GM12878 (cell line): ENCODE measurements at regions of chr4 and their contacts with region 1.

Region 1: GRCh38 chr4:86497980-86498862 is 95.9 kb upstream of the PTPN13 start:
- DNase-seq: no peak
- ATAC-seq: peak; percentile 93
- H3K4me3 ChIP-seq: no peak overlapping the region
- H3K27ac ChIP-seq: no peak overlapping the region
- H3K4me1 ChIP-seq: no peaks in the 10 kb centered on the region
- H3K27me3 ChIP-seq: no peaks in the 10 kb centered on the region
- CTCF ChIP-seq: peak; percentile 74 to 85 (median 84); a peak in 5 of 6 replicates
- EP300 ChIP-seq: no peak
- POLR2A ChIP-seq: no peak
- RAD21 ChIP-seq: peak; percentile 88

Region 2: DNA sequence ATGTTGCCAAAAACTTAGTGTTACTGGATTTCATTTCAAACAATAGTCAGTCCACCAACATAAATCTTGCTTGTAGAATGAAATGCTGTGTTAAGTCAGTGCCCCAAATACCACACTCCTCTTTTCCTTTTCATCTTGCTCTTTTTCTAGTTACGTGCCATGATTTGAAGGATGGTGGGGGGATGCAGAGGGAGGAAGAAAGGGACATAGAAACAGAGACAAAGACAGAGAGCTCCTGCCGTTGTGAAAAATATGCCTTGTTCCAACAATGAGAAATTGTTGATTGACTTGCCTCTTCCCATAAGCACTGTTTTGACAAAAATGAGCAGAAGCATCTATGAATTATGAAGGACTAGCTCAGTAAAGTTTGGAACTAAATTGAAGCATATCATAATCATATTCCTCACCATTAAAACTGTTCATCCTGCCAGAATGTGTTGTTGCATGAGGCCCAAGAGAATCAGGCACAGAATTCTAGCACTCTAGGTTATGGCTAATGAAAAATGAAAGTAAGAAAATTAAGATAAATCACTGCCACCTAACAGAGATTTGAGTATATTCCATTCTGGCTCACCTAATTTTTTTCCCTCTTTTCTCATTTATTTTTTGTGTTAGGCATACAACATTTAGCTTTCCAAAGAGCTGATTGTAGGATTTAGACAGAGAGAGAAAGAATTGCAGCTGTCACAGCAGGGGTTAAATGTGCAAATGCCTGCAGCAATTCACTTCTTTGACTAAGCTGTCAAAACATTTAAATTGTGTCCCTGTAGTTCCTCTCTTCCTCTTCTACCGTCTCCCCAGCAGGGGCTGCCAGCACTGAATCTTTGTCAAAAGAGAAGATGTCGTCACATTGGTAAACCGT is 15.7 kb before region 1 on chr4:
- CTCF ChIA-PET with region 1: interaction called, 36 read pairs
- POLR2A ChIA-PET with region 1: no interaction called
- RAD21 ChIA-PET with region 1: interaction called, 9 read pairs
- SMC1A ChIA-PET with region 1: interaction called, 42 read pairs
- in situ Hi-C with region 1: no loop called
- intact Hi-C with region 1: no loop called
- DNase-seq: no peak
- ATAC-seq: peak; percentile 56; the same call in 2 of the 3 replicates
- H3K4me3 ChIP-seq: no peak overlapping the region
- H3K27ac ChIP-seq: no peak overlapping the region
- H3K4me1 ChIP-seq: no peaks in the 10 kb centered on the region
- H3K27me3 ChIP-seq: no peaks in the 10 kb centered on the region
- CTCF ChIP-seq: 0 out of 6 replicates have a peak, but pooled peaks of 1 of the 3 experiments have one; percentile 0
- EP300 ChIP-seq: no peak
- POLR2A ChIP-seq: no peak
- RAD21 ChIP-seq: peak; percentile 13; the same call in 1 of the 2 replicates

Region 3: GRCh38 chr4:86557526-86557925 is 59.3 kb after region 1 on chr4:
- CTCF ChIA-PET with region 1: interaction called, 7 read pairs
- POLR2A ChIA-PET with region 1: interaction called, 4 read pairs
- RAD21 ChIA-PET with region 1: interaction called, 71 read pairs
- SMC1A ChIA-PET with region 1: interaction called, 6 read pairs
- in situ Hi-C with region 1: no loop called
- intact Hi-C with region 1: no loop called
- DNase-seq: no peak
- ATAC-seq: peak; percentile 88
- H3K4me3 ChIP-seq: no peak overlapping the region
- H3K27ac ChIP-seq: peak overlapping the region; percentile 69; the same call in 1 of the 2 replicates
- H3K4me1 ChIP-seq: peaks cover 7% of the 10 kb centered on the region; the same call in 1 of the 2 replicates
- H3K27me3 ChIP-seq: no peaks in the 10 kb centered on the region; a peak in 1 of 4 replicates
- CTCF ChIP-seq: no peak
- EP300 ChIP-seq: no peak
- POLR2A ChIP-seq: no peak
- RAD21 ChIP-seq: no peak

Region 4: DNA sequence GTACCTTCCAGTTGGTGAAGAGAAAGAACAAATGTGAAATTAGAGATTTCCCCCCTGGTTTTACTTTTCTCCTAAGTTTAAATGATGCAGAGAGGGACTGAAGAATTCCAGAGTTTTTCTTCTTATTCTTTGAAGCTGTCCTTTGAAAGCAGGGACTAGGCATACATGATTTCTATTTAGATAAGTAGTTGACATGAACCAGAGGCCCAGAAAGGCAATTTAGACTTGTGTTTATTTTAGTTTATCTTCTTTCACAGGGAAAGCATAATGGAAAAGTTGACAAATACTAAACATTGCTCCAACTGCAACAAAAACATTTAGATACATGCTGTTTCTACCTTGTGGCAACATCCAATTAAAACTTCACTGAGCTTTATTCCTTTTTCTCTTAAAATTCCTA is 127.8 kb after region 1 on chr4:
- CTCF ChIA-PET with region 1: interaction called, 5 read pairs
- POLR2A ChIA-PET with region 1: no interaction called
- RAD21 ChIA-PET with region 1: interaction called, 6 read pairs
- SMC1A ChIA-PET with region 1: interaction called, 13 read pairs
- in situ Hi-C with region 1: no loop called
- intact Hi-C with region 1: no loop called
- DNase-seq: no peak
- ATAC-seq: no peak
- H3K4me3 ChIP-seq: no peak overlapping the region
- H3K27ac ChIP-seq: no peak overlapping the region
- H3K4me1 ChIP-seq: no peaks in the 10 kb centered on the region
- H3K27me3 ChIP-seq: no peaks in the 10 kb centered on the region
- CTCF ChIP-seq: no peak
- EP300 ChIP-seq: no peak
- POLR2A ChIP-seq: no peak
- RAD21 ChIP-seq: no peak

Region 5: DNA sequence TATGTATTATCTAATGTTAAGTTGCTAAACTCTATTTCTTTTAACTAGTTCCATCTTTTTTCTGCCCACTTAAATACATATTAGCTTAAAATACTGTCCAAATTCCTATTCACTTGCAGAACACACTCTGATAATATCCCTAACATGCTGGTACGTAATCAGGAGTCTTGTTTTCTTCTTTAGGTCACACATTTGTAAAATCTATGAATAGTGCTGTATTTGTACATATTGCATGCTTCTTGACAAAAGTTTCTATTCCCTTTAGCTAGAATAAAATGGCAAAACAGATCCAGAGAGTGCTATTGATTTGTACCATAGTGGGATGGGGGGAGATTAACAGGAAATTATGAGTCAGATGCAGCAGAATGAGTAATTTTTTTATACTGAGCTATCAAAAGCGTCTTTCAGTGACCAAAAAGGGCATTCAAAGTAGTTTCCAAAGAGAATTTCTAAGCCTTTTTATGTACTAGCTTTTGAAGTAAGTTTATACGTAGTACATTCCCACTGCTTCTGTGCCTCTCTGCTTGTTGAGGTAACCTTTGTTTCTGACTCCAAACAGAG is 222.4 kb after region 1 on chr4:
- CTCF ChIA-PET with region 1: interaction called, 18 read pairs
- POLR2A ChIA-PET with region 1: no interaction called
- RAD21 ChIA-PET with region 1: interaction called, 6 read pairs
- SMC1A ChIA-PET with region 1: interaction called, 12 read pairs
- in situ Hi-C with region 1: no loop called
- intact Hi-C with region 1: no loop called
- DNase-seq: no peak
- ATAC-seq: no peak
- H3K4me3 ChIP-seq: no peak overlapping the region
- H3K27ac ChIP-seq: no peak overlapping the region
- H3K4me1 ChIP-seq: no peaks in the 10 kb centered on the region
- H3K27me3 ChIP-seq: no peaks in the 10 kb centered on the region
- CTCF ChIP-seq: no peak
- EP300 ChIP-seq: no peak
- POLR2A ChIP-seq: no peak
- RAD21 ChIP-seq: no peak

Region 6: GRCh38 chr4:86816501-86817273 is 318.5 kb after region 1 on chr4:
- CTCF ChIA-PET with region 1: interaction called, 71 read pairs
- POLR2A ChIA-PET with region 1: no interaction called
- RAD21 ChIA-PET with region 1: interaction called, 13 read pairs
- SMC1A ChIA-PET with region 1: interaction called, 59 read pairs
- in situ Hi-C with region 1: no loop called
- intact Hi-C with region 1: loop called (anchors 10 kb)
- DNase-seq: no peak
- ATAC-seq: no peak; the same call in 2 of the 3 replicates
- H3K4me3 ChIP-seq: no peak overlapping the region
- H3K27ac ChIP-seq: no peak overlapping the region
- H3K4me1 ChIP-seq: no peaks in the 10 kb centered on the region
- H3K27me3 ChIP-seq: no peaks in the 10 kb centered on the region
- CTCF ChIP-seq: no peak
- EP300 ChIP-seq: no peak
- POLR2A ChIP-seq: no peak
- RAD21 ChIP-seq: no peak

Region 7: GRCh38 chr4:87093443-87094123 is 595.4 kb after region 1 on chr4:
- CTCF ChIA-PET with region 1: interaction called, 31 read pairs
- POLR2A ChIA-PET with region 1: no interaction called
- RAD21 ChIA-PET with region 1: interaction called, 12 read pairs
- SMC1A ChIA-PET with region 1: interaction called, 15 read pairs
- in situ Hi-C with region 1: no loop called
- intact Hi-C with region 1: loop called (anchors 5 kb)
- DNase-seq: peak; percentile 43
- ATAC-seq: peak; percentile 93
- H3K4me3 ChIP-seq: no peak overlapping the region
- H3K27ac ChIP-seq: peak overlapping the region; percentile 13; the same call in 1 of the 2 replicates
- H3K4me1 ChIP-seq: peaks cover 16% of the 10 kb centered on the region
- H3K27me3 ChIP-seq: no peaks in the 10 kb centered on the region
- CTCF ChIP-seq: peak; percentile 62 to 78 (median 64)
- EP300 ChIP-seq: 0 out of 4 replicates have a peak, but pooled peaks of 1 of the 2 experiments have one; percentile 9
- POLR2A ChIP-seq: no peak
- RAD21 ChIP-seq: peak; percentile 85

Region 8: DNA sequence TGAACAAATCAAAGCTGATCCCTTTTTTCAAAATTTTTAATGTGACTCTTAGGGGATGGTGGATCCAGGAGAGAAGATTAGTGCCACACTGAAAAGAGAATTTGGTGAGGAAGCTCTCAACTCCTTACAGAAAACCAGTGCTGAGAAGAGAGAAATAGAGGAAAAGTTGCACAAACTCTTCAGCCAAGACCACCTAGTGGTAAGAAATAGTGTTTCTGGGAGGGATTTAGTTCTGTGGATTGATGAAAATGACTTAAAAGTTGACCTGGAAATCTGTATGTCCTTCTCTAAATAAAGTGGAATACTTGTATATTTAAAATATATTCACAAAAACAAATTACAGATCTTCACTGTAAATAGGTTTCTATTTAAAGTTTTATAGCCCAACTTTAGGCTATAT is 953.3 kb after region 1 on chr4:
- CTCF ChIA-PET with region 1: no interaction called
- POLR2A ChIA-PET with region 1: no interaction called
- RAD21 ChIA-PET with region 1: no interaction called
- SMC1A ChIA-PET with region 1: no interaction called
- in situ Hi-C with region 1: no loop called
- intact Hi-C with region 1: no loop called
- DNase-seq: no peak
- ATAC-seq: no peak
- H3K4me3 ChIP-seq: no peak overlapping the region
- H3K27ac ChIP-seq: no peak overlapping the region
- H3K4me1 ChIP-seq: no peaks in the 10 kb centered on the region
- H3K27me3 ChIP-seq: no peaks in the 10 kb centered on the region
- CTCF ChIP-seq: peak in 2 of 3 experiments; percentile 7 to 13; a peak in 1 of 6 replicates
- EP300 ChIP-seq: no peak
- POLR2A ChIP-seq: no peak
- RAD21 ChIP-seq: no peak